Dendritic cell treated with granulocyte-macrophage colony-stimulating factor and Interleukin-4, amounts not matched to agents 40 ng/mL and 50 ng/mL, for 4 days (primary cell): ENCODE measurements at regions of chr1 and their contacts with region 1.

Region 1: GRCh38 chr1:153494976-153495535 is 34.6 kb upstream of the S100A7 start:
- H3K4me3 Mint-ChIP-seq: no peak overlapping the region
- H3K27ac Mint-ChIP-seq: no peak overlapping the region
- H3K4me1 Mint-ChIP-seq: peaks cover 11% of the 10 kb centered on the region
- H3K27me3 Mint-ChIP-seq: peaks cover 14% of the 10 kb centered on the region

Region 2: GRCh38 chr1:153352523-153352922 is 142.5 kb before region 1 on chr1:
- intact Hi-C with region 1: loop called (anchors 1 kb)
- H3K4me3 Mint-ChIP-seq: no peak overlapping the region
- H3K27ac Mint-ChIP-seq: no peak overlapping the region
- H3K4me1 Mint-ChIP-seq: peaks cover 36% of the 10 kb centered on the region
- H3K27me3 Mint-ChIP-seq: peaks cover 15% of the 10 kb centered on the region